Gastrocnemius medialis (tissue), 4 donors: ENCODE measurements at regions of chr11 and their contacts with region 1.

Region 1: DNA sequence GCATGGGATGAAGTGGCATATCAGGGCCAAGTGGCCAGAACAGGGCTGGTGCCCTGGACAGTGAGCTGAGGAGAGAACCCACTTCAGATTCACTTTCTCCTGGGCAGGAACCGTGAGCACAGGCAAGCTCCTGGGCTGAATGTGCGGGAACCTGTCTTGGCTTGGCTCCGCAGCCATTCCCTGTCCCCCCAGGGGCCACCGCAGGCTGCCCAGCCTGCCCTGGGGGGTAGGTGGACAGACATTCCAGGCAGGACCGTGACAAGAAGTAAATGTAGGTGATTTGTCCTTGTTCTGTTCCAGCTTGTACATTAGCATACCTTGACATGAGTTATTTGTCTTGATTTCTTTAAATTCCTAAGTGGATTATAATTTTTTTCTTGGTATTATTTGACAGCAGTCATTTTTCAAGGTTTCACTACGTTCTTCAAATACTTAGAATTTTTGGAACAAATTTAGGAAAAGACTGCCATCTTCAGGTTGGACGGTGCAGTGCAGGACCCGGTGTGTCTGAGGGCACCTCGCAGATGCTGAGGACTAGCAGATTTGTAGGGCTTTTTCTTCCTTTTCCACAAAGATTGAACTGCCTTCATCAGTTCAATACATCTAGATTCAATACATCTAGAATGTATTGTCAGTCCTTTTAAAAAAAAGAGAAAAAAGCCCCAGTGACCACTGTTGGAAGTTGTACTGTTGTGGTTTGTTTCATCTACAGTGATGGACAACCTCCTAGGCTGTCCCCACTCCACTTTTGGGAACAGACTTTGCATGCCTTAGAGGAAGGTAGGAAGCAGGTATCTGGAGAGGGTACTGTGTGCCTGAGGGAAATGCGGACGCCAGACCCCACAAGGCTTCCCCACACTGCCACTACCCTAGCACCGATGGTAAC is 115.1 kb upstream of the RASSF10 start:
- DNase-seq: peak in 1 of 2 donors; percentile 46
- ATAC-seq: no peak
- H3K4me3 ChIP-seq: no peak overlapping the region
- H3K27ac ChIP-seq: peak overlapping the region; percentile 68 to 82 (median 70)
- H3K4me1 ChIP-seq: peaks cover 48 to 50% of the 10 kb centered on the region in 2 donors
- H3K27me3 ChIP-seq: no peaks in the 10 kb centered on the region
- CTCF ChIP-seq: peak; percentile 87 to 93 (median 89)
- POLR2A ChIP-seq: no peak

Region 2: GRCh38 chr11:12319988-12320387 is 574.0 kb before region 1 on chr11:
- in situ Hi-C with region 1: loop called in 3 of 4 experiments (anchors 10 to 25 kb)
- intact Hi-C with region 1: no loop called
- DNase-seq: no peak
- ATAC-seq: no peak
- H3K4me3 ChIP-seq: no peak overlapping the region
- H3K27ac ChIP-seq: no peak overlapping the region
- H3K4me1 ChIP-seq: no peaks in the 10 kb centered on the region
- H3K27me3 ChIP-seq: no peaks in the 10 kb centered on the region
- CTCF ChIP-seq: no peak
- POLR2A ChIP-seq: no peak

Region 3: DNA sequence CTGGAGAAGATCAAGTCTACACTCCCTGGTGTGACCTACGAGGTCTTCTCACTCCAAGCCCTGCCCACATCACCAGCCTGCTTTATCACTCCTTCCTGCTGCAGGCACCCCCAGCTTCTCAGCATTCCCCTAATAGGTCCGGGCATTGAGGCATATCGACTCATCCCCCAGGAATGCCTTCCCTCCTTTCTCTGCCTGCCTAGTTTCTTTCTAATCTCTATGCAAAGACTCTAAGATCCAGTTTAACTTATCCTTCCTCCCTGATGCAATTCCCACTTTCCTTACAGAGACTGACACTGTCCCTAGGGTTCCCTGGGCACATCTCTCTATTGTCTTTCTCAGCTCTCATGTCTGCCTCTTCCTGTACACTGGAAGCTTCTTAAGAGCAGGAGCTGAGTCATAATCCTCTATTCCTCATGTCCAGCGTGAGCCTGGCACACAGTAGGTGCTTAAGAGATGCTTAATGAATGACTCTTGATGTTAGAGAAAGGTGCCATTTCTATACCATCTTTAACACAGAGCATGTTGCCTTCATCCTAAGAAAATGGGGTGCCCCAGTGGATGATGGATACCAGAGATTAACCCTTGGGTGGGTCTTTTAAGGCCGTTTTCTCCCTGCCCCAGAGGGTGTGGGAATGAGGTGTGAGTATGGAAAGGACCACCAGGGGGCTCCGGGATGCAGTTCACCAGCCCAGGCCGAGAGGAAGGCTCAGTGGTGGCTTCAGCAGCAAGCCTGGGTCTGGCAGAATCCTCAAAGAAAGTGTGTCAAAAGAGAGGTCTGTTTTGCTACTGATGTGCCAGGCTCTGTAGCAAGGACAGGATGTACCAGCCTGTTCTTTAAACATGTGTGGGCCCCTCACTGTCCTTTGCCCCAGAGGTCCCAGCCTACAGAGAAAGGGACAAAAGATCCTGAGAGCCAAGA is 482.0 kb before region 1 on chr11:
- in situ Hi-C with region 1: loop called (anchors 5 to 10 kb)
- intact Hi-C with region 1: loop called (anchors 1 kb)
- DNase-seq: peak; percentile 34 to 66
- ATAC-seq: peak; percentile 76 to 82
- H3K4me3 ChIP-seq: no peak overlapping the region
- H3K27ac ChIP-seq: peak overlapping the region; percentile 38 to 65 (median 56)
- H3K4me1 ChIP-seq: peaks cover 34 to 35% of the 10 kb centered on the region in 2 donors
- H3K27me3 ChIP-seq: no peaks in the 10 kb centered on the region
- CTCF ChIP-seq: peak; percentile 65 to 80 (median 77)
- POLR2A ChIP-seq: no peak

Region 4: GRCh38 chr11:12787847-12788246 is 106.2 kb before region 1 on chr11:
- in situ Hi-C with region 1: no loop called
- intact Hi-C with region 1: no loop called
- DNase-seq: no peak
- ATAC-seq: no peak
- H3K4me3 ChIP-seq: no peak overlapping the region
- H3K27ac ChIP-seq: peak overlapping the region in 3 of 4 donors; percentile 87 to 95 (median 93)
- H3K4me1 ChIP-seq: peaks cover 46 to 83% of the 10 kb centered on the region in 2 donors
- H3K27me3 ChIP-seq: no peaks in the 10 kb centered on the region
- CTCF ChIP-seq: no peak
- POLR2A ChIP-seq: no peak

Region 5: DNA sequence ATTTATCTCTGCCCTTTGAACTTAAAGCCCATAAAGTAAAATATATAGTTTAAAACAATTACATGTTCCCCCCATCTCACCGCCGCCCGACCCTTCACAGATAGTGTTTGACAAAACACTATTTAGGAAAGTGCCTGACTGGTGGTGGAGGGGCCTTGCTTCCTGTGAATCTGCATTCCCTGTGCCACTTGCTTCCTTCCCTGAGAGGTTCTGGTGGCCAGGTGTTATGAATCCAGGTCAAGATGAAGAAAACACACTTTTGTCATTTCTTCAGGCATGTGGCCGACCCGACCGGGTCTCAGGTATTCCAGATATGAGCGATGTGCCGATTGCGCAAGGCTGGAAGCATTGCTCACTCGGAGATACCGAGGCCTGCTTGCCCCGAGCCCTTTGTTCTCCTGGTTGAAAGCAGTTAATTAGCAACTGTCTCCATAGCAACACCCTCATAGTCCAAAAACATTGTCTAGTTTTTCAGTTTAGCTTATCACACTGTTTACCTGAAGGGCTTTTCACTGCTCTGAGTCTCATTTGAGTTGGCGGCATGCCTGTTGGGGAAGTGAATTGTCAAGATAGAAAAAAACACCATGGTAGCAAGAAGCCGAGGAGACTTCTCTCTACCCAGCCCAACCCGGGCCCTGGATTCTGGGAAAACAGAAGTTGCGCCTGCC is 91.5 kb before region 1 on chr11:
- in situ Hi-C with region 1: loop called in 1 of 4 experiments (anchors 10 kb)
- intact Hi-C with region 1: no loop called
- DNase-seq: no peak
- ATAC-seq: peak in 1 of 2 donors; percentile 3
- H3K4me3 ChIP-seq: no peak overlapping the region
- H3K27ac ChIP-seq: peak overlapping the region; percentile 29 to 71 (median 52)
- H3K4me1 ChIP-seq: peaks cover 69 to 81% of the 10 kb centered on the region in 2 donors
- H3K27me3 ChIP-seq: no peaks in the 10 kb centered on the region
- CTCF ChIP-seq: no peak
- POLR2A ChIP-seq: no peak

Region 6: GRCh38 chr11:12864316-12865156 is 29.5 kb before region 1 on chr11:
- in situ Hi-C with region 1: no loop called
- intact Hi-C with region 1: no loop called
- DNase-seq: no peak
- ATAC-seq: no peak
- H3K4me3 ChIP-seq: no peak overlapping the region
- H3K27ac ChIP-seq: peak overlapping the region in 1 of 4 donors; percentile 15
- H3K4me1 ChIP-seq: peaks cover 31 to 44% of the 10 kb centered on the region in 2 donors
- H3K27me3 ChIP-seq: no peaks in the 10 kb centered on the region
- CTCF ChIP-seq: no peak
- POLR2A ChIP-seq: no peak